Activated T-helper 1 cell treated with anti-CD3 and anti-CD28 coated beads, Interleukin-12 subunit alpha, Interleukin-12 subunit beta, Interleukin-2, Interleukin-4 antibody, amounts not matched to agents 30 ng/mL and 10 ng/mL and 1 ng/mL, durations not matched to agents 14 hours and 24 hours and 36 hours (primary cell): ENCODE measurements at regions of chrX and their contacts with region 1.

Region 1: DNA sequence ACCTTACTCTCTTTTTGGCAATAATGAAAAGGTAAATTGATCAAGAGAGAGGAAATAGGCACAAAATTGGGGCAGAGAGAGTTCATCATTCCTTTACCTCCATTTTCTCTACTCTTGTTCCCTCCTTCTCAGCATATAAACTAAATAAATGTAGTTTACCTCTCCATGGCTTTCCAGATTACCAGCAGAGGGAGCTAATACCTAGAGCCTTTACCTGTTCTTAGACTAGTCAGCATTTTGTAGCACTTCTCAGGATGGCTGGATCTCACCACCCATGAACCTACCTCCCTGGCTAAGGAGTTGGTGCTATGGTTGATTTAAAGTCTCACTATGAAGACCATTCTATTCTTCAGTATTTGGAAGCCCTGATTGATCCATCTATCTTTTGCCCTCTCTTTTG is 15.7 kb downstream of the OFD1 start:
- DNase-seq: no peak
- H3K4me3 Mint-ChIP-seq: no peak overlapping the region
- H3K27ac Mint-ChIP-seq: no peak overlapping the region
- H3K4me1 Mint-ChIP-seq: peaks cover 29% of the 10 kb centered on the region
- H3K27me3 Mint-ChIP-seq: no peaks in the 10 kb centered on the region

Region 2: GRCh38 chrX:13506574-13506973 is 243.6 kb before region 1 on chrX:
- intact Hi-C with region 1: loop called (anchors 2 kb)
- DNase-seq: peak; percentile 2
- H3K4me3 Mint-ChIP-seq: no peak overlapping the region
- H3K27ac Mint-ChIP-seq: no peak overlapping the region
- H3K4me1 Mint-ChIP-seq: peaks cover 9% of the 10 kb centered on the region
- H3K27me3 Mint-ChIP-seq: no peaks in the 10 kb centered on the region

Region 3: GRCh38 chrX:13658602-13659001 is 91.6 kb before region 1 on chrX:
- intact Hi-C with region 1: loop called (anchors 1 kb)
- DNase-seq: no peak
- H3K4me3 Mint-ChIP-seq: no peak overlapping the region
- H3K27ac Mint-ChIP-seq: no peak overlapping the region
- H3K4me1 Mint-ChIP-seq: peaks cover 23% of the 10 kb centered on the region
- H3K27me3 Mint-ChIP-seq: no peaks in the 10 kb centered on the region